CD4-positive, alpha-beta T cell (primary cell): ENCODE measurements at regions of chr19 and their contacts with region 1.

Region 1: GRCh38 chr19:5753743-5754142 is 30.8 kb downstream of the PRR22 start:
- DNase-seq: no peak
- ATAC-seq: no peak
- H3K4me3 ChIP-seq: no peak overlapping the region
- H3K4me3 Mint-ChIP-seq: no peak overlapping the region
- H3K27ac ChIP-seq: no peak overlapping the region
- H3K27ac Mint-ChIP-seq: no peak overlapping the region
- H3K4me1 ChIP-seq: no peaks in the 10 kb centered on the region
- H3K4me1 Mint-ChIP-seq: no peaks in the 10 kb centered on the region
- H3K27me3 ChIP-seq: peaks cover 0 to 5% of the 10 kb centered on the region in 2 experiments
- H3K27me3 Mint-ChIP-seq: peaks cover 5% of the 10 kb centered on the region
- CTCF ChIP-seq: no peak

Region 2: DNA sequence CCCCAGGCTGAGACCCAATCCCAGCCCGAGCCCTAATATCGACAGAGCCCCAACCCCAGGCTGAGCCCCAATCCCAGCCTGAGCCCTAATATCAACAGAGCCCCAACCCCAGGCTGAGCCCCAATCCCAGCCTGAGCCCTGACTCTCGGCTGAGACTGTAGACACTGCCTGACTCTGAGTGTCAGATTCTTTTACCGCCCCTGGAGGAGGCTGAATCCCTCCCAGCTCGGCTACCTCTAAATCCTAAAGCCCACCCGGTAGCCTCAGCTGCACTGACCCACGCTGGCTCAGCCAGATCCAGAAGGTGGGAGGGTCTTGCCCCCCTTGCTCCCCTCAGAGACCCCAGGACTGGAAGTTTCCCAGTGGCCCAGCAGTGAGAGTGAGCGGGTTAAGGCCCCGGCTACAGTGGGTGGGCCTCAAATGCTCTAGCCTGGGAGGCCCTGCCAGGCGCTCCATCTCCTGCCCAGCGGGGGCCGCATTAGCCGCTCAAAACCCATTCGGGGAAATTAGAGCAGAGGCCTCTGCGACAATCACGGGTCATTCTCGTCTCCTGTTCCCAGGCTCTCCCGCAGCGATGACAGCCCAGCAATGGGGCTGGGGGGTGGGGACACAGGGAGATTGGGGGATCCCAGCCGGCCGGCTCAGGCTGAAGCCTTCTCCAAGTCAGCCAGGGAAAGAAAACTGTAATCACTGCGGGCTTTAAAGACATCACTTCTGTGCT is 254.8 kb before region 1 on chr19:
- CTCF ChIA-PET with region 1: no interaction called
- POLR2A ChIA-PET with region 1: no interaction called
- intact Hi-C with region 1: loop called in 1 of 2 experiments (anchors 5 kb)
- DNase-seq: no peak
- ATAC-seq: no peak
- H3K4me3 ChIP-seq: no peak overlapping the region
- H3K4me3 Mint-ChIP-seq: no peak overlapping the region
- H3K27ac ChIP-seq: no peak overlapping the region
- H3K27ac Mint-ChIP-seq: no peak overlapping the region
- H3K4me1 ChIP-seq: no peaks in the 10 kb centered on the region
- H3K4me1 Mint-ChIP-seq: no peaks in the 10 kb centered on the region
- H3K27me3 ChIP-seq: peaks cover 28 to 30% of the 10 kb centered on the region in 2 experiments
- H3K27me3 Mint-ChIP-seq: peaks cover 50% of the 10 kb centered on the region
- CTCF ChIP-seq: no peak

Region 3: GRCh38 chr19:5716271-5716670 is 37.5 kb before region 1 on chr19:
- CTCF ChIA-PET with region 1: no interaction called
- POLR2A ChIA-PET with region 1: no interaction called
- intact Hi-C with region 1: no loop called
- DNase-seq: no peak
- ATAC-seq: no peak
- H3K4me3 ChIP-seq: no peak overlapping the region
- H3K4me3 Mint-ChIP-seq: peak overlapping the region; percentile 72
- H3K27ac ChIP-seq: no peak overlapping the region
- H3K27ac Mint-ChIP-seq: no peak overlapping the region
- H3K4me1 ChIP-seq: peaks cover 33% of the 10 kb centered on the region
- H3K4me1 Mint-ChIP-seq: peaks cover 26% of the 10 kb centered on the region
- H3K27me3 ChIP-seq: no peaks in the 10 kb centered on the region
- H3K27me3 Mint-ChIP-seq: no peaks in the 10 kb centered on the region
- CTCF ChIP-seq: no peak

Region 4: DNA sequence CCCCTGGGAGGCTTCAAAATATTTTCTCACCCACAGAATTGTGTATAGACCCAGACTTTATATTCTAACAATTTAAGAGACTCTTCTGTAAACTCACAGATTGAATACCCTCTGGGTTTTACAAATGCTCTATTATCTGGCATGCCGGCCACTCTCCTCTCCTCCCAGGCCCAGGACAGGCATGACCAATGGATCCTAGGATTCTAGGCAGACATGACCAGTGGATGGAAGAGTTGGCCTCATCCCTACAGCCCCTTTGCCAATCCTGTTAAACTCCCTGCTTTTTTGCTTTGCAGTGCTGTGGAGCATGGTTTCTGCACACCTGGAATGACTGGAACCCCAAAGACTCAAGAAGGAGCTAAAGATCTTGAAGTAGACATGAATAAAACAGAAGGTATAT is 387.5 kb after region 1 on chr19:
- CTCF ChIA-PET with region 1: no interaction called
- POLR2A ChIA-PET with region 1: no interaction called
- intact Hi-C with region 1: loop called in 1 of 2 experiments (anchors 10 kb)
- DNase-seq: no peak
- ATAC-seq: no peak
- H3K4me3 ChIP-seq: no peak overlapping the region
- H3K4me3 Mint-ChIP-seq: no peak overlapping the region
- H3K27ac ChIP-seq: no peak overlapping the region
- H3K27ac Mint-ChIP-seq: no peak overlapping the region
- H3K4me1 ChIP-seq: no peaks in the 10 kb centered on the region
- H3K4me1 Mint-ChIP-seq: no peaks in the 10 kb centered on the region
- H3K27me3 ChIP-seq: no peaks in the 10 kb centered on the region
- H3K27me3 Mint-ChIP-seq: no peaks in the 10 kb centered on the region
- CTCF ChIP-seq: no peak